Vagina (tissue), 2 donors: ENCODE measurements at regions of chr6 and their contacts with region 1.

Region 1: GRCh38 chr6:42819803-42820511 is 38.1 kb downstream of the BICRAL start:
- DNase-seq: no peak
- H3K4me3 ChIP-seq: peak overlapping the region in 1 of 2 donors; percentile 41
- H3K27ac ChIP-seq: peak overlapping the region; percentile 76
- H3K4me1 ChIP-seq: peaks cover 17% of the 10 kb centered on the region
- H3K27me3 ChIP-seq: no peaks in the 10 kb centered on the region
- CTCF ChIP-seq: no peak
- POLR2A ChIP-seq: no peak

Region 2: GRCh38 chr6:42766141-42766670 is 53.8 kb before region 1 on chr6:
- intact Hi-C with region 1: loop called (anchors 10 kb)
- DNase-seq: no peak
- H3K4me3 ChIP-seq: no peak overlapping the region
- H3K27ac ChIP-seq: no peak overlapping the region
- H3K4me1 ChIP-seq: peaks cover 9% of the 10 kb centered on the region
- H3K27me3 ChIP-seq: no peaks in the 10 kb centered on the region
- CTCF ChIP-seq: no peak
- POLR2A ChIP-seq: no peak

Region 3: GRCh38 chr6:43129434-43130194 is 309.7 kb after region 1 on chr6:
- intact Hi-C with region 1: no loop called
- DNase-seq: no peak
- H3K4me3 ChIP-seq: no peak overlapping the region
- H3K27ac ChIP-seq: no peak overlapping the region
- H3K4me1 ChIP-seq: peaks cover 36% of the 10 kb centered on the region
- H3K27me3 ChIP-seq: no peaks in the 10 kb centered on the region
- CTCF ChIP-seq: peak in 1 of 3 experiments; percentile 35
- POLR2A ChIP-seq: no peak